MCF 10A (cell line): ENCODE measurements at regions of chr7 and their contacts with region 1.

Region 1: DNA sequence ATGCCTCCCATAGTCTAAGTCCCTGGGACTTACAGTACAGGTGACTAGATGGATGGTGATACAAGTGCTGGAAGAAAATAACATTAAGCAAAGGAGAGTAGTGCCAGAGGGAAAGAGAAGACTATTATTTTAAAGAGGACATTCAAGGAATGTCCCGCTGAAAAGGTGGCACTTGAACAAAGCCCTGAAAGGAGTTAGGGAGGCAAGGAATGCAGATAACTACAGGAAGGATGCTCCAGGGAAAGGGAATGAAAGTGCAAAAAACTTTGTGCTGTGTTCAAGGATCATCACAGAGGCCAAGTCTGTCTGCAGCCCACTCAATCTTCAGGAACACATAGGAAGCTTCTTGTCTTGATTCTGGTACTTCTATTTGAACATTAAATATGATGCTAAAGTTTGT is 14.9 kb downstream of the ANKMY2 start:
- DNase-seq: no peak
- H3K4me3 Mint-ChIP-seq: no peak overlapping the region
- H3K27ac Mint-ChIP-seq: no peak overlapping the region
- H3K4me1 Mint-ChIP-seq: peaks cover 10% of the 10 kb centered on the region
- H3K27me3 Mint-ChIP-seq: no peaks in the 10 kb centered on the region
- CTCF ChIP-seq: no peak

Region 2: DNA sequence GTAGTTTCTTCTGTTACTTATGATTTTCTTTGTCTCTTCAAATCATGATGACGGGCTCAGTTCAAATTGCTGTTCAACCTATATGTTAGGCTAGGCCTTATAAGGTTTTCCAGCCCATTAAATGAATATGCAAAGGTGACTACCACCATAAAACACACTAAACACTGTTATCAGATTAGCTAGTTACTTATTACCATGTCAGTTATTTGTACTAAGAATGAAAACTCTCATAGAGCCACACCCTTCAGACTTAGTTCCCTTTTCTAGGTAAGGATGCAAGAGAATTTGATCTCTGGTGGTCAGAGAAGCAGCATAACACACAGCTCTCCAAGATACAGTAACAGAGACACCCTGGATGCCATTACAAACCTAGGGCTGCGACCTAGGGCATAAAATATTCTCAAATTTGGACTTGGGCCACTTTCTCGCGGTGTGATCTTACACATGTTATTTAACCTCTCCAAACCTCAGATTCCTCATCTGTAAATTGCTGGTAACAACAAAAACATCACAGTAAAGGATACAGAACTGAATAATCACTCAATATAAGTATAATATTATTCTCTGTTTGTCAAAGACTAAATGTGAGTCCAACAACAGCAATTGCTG is 20.7 kb before region 1 on chr7:
- CTCF ChIA-PET with region 1: interaction called, 3 read pairs
- POLR2A ChIA-PET with region 1: interaction called, 3 read pairs
- intact Hi-C with region 1: loop called (anchors 1 kb)
- DNase-seq: no peak
- H3K4me3 Mint-ChIP-seq: no peak overlapping the region
- H3K27ac Mint-ChIP-seq: no peak overlapping the region
- H3K4me1 Mint-ChIP-seq: no peaks in the 10 kb centered on the region
- H3K27me3 Mint-ChIP-seq: no peaks in the 10 kb centered on the region
- CTCF ChIP-seq: no peak